ENCODE measurements at regions of chr6 and their contacts with region 1.

Region 1: GRCh38 chr6:26031595-26032339 is 55.5 kb upstream of the HFE start:
- DNase-seq: peak; percentile 99
- ATAC-seq: peak; percentile 66
- H3K4me3 ChIP-seq: peak overlapping the region; percentile 70 to 74
- H3K27ac ChIP-seq: peak overlapping the region; percentile 98
- H3K4me1 ChIP-seq: peaks cover 51 to 87% of the 10 kb centered on the region in 2 experiments
- H3K27me3 ChIP-seq: no peaks in the 10 kb centered on the region
- CTCF ChIP-seq: no peak
- POLR2A ChIP-seq: peak; percentile 99
- RAD21 ChIP-seq: peak; percentile 5; the same call in 1 of the 2 replicates

Region 2: GRCh38 chr6:25942561-25943147 is 89.1 kb before region 1 on chr6:
- CTCF ChIA-PET with region 1: no interaction called
- POLR2A ChIA-PET with region 1: no interaction called
- RAD21 ChIA-PET with region 1: no interaction called
- intact Hi-C with region 1: no loop called
- DNase-seq: peak; percentile 48
- ATAC-seq: peak; percentile 84
- H3K4me3 ChIP-seq: no peak overlapping the region
- H3K27ac ChIP-seq: no peak overlapping the region
- H3K4me1 ChIP-seq: no peaks in the 10 kb centered on the region
- H3K27me3 ChIP-seq: no peaks in the 10 kb centered on the region
- CTCF ChIP-seq: peak; percentile 42 to 73 (median 60); a peak in 4 of 6 replicates
- POLR2A ChIP-seq: no peak
- RAD21 ChIP-seq: peak; percentile 88

Region 3: GRCh38 chr6:25971187-25971811 is 60.5 kb before region 1 on chr6:
- CTCF ChIA-PET with region 1: no interaction called
- POLR2A ChIA-PET with region 1: no interaction called
- RAD21 ChIA-PET with region 1: no interaction called
- intact Hi-C with region 1: no loop called
- DNase-seq: peak; percentile 73
- ATAC-seq: peak; percentile 93
- H3K4me3 ChIP-seq: peak overlapping the region in 1 of 2 experiments; percentile 39; a peak in 2 of 4 replicates
- H3K27ac ChIP-seq: peak overlapping the region; percentile 59; the same call in 1 of the 2 replicates
- H3K4me1 ChIP-seq: peaks cover 16 to 19% of the 10 kb centered on the region in 2 experiments
- H3K27me3 ChIP-seq: no peaks in the 10 kb centered on the region
- CTCF ChIP-seq: no peak
- POLR2A ChIP-seq: no peak
- RAD21 ChIP-seq: no peak

Region 4: DNA sequence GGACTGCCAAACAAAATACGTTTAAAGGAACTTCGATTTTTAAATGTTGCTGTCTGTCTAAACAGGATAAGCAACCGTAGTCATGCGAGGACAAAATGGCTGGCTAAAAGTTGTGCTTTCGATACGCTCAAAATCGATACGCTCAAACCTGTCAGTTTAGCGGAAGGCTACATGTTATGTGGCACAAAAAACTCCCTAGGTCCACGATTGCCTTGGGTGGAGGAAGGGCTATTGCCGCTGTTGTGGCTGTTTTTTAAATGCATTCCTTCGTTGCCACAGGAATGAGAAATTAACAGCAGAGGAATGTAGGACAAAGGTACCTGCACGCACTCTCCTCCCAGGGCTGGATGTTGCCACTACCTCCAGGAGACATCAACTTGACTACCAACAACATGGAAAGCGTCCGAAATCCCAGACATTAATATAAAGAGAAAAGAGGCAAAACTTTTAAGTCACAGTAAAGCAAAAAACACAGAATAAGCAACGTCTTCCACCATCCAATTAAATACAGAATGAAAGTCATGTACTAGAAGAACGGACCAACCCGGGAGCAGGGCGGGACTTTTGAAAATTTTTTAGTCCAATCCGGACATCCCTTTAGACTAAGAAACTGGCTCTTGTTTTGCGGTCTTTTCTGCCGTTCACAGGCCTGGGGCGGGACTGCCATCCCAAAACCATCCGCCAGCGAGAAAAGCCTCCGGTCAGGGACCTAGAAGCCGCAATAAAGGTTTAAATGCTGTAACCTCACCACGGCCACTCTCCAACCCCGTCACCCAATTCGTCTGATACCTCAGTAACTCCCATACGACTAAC is 23.3 kb after region 1 on chr6:
- CTCF ChIA-PET with region 1: no interaction called
- POLR2A ChIA-PET with region 1: interaction called, 202 read pairs
- RAD21 ChIA-PET with region 1: no interaction called
- intact Hi-C with region 1: loop called (anchors 1 kb)
- DNase-seq: peak; percentile 98
- ATAC-seq: peak; percentile 70
- H3K4me3 ChIP-seq: peak overlapping the region; percentile 52 to 73
- H3K27ac ChIP-seq: peak overlapping the region; percentile 85
- H3K4me1 ChIP-seq: peaks cover 41 to 68% of the 10 kb centered on the region in 2 experiments
- H3K27me3 ChIP-seq: no peaks in the 10 kb centered on the region
- CTCF ChIP-seq: 0 out of 6 replicates have a peak, but pooled peaks of 1 of the 3 experiments have one; percentile 5
- POLR2A ChIP-seq: no peak
- RAD21 ChIP-seq: peak; percentile 30

Region 5: GRCh38 chr6:26103770-26104456 is 72.1 kb after region 1 on chr6:
- CTCF ChIA-PET with region 1: interaction called, 10 read pairs
- POLR2A ChIA-PET with region 1: interaction called, 54 read pairs
- RAD21 ChIA-PET with region 1: no interaction called
- intact Hi-C with region 1: loop called (anchors 1 kb)
- DNase-seq: peak; percentile 95
- ATAC-seq: peak; percentile 74
- H3K4me3 ChIP-seq: peak overlapping the region; percentile 48 to 59
- H3K27ac ChIP-seq: peak overlapping the region; percentile 94
- H3K4me1 ChIP-seq: peaks cover 17 to 39% of the 10 kb centered on the region in 2 experiments
- H3K27me3 ChIP-seq: no peaks in the 10 kb centered on the region
- CTCF ChIP-seq: peak in 2 of 3 experiments; percentile 35 to 40; a peak in 2 of 6 replicates
- POLR2A ChIP-seq: peak; percentile 99
- RAD21 ChIP-seq: peak; percentile 42

Region 6: DNA sequence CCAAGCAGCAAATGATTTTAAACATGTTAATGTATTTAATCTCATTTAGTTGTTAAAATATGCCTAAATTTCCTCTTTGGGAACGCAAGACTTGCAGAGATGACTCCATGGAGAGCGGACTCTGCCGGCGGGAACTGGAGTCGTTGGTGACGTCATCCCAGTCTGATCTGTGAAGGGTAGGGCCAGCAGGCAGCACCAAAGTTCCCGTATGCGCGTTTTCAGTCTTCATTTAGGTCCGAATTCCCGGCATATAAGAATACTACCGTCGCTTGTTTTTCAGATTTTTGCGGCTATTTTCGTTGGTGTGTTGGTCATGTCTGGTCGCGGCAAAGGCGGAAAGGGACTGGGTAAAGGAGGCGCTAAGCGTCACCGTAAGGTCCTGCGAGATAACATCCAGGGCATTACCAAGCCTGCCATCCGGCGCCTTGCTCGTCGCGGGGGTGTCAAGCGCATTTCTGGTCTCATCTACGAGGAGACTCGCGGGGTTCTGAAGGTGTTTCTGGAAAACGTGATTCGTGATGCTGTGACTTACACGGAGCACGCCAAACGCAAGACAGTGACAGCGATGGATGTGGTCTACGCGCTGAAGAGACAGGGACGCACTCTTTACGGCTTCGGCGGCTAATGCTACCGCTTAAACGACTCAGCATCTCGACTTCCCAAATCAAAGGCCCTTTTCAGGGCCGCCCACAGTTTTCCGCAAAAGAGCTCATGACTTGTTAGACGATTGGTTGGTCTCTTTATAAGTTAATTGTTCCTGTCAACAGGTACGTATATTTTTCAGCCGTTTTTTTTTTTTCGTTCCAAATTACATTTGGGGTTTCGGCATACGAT is 172.8 kb after region 1 on chr6:
- CTCF ChIA-PET with region 1: no interaction called
- POLR2A ChIA-PET with region 1: interaction called, 44 read pairs
- RAD21 ChIA-PET with region 1: no interaction called
- intact Hi-C with region 1: loop called (anchors 2 kb)
- DNase-seq: peak; percentile 98
- ATAC-seq: peak; percentile 72
- H3K4me3 ChIP-seq: peak overlapping the region; percentile 63 to 71
- H3K27ac ChIP-seq: peak overlapping the region; percentile 98
- H3K4me1 ChIP-seq: peaks cover 26 to 40% of the 10 kb centered on the region in 2 experiments
- H3K27me3 ChIP-seq: no peaks in the 10 kb centered on the region
- CTCF ChIP-seq: peak in 1 of 3 experiments; percentile 20; a peak in 2 of 6 replicates
- POLR2A ChIP-seq: peak; percentile 99
- RAD21 ChIP-seq: peak; percentile 2; the same call in 1 of the 2 replicates

Region 7: DNA sequence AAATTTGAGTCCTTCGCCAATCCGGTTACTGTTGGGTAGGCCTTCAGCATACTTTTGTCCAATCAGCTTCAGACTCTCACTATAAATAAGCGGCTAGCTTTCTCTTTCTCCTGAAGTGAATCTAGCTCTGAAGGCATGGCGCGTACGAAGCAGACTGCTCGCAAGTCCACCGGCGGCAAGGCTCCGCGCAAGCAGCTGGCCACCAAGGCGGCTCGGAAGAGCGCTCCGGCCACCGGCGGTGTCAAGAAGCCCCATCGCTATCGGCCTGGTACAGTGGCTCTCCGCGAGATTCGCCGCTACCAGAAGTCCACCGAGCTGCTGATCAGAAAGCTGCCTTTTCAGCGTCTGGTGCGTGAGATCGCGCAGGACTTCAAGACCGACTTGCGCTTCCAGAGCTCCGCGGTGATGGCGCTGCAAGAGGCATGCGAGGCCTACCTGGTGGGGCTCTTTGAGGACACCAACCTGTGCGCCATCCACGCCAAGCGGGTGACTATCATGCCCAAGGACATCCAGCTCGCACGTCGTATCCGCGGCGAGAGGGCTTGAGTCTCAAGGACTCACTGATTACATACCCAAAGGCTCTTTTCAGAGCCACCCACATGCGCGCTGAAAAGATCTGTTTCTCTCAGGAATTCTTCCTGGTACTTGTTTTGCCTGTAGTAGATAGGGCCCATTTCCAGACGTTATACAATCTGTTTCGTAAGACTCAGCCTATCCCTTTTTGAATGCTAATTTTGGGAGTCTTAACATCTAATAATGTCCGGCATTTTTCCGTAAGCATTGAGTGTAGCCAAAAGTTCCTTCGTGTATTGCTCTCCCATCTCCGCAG is 1778.4 kb after region 1 on chr6:
- CTCF ChIA-PET with region 1: no interaction called
- POLR2A ChIA-PET with region 1: interaction called, 10 read pairs
- RAD21 ChIA-PET with region 1: no interaction called
- intact Hi-C with region 1: no loop called
- DNase-seq: peak; percentile 97
- ATAC-seq: peak; percentile 43
- H3K4me3 ChIP-seq: peak overlapping the region; percentile 59 to 69
- H3K27ac ChIP-seq: peak overlapping the region; percentile 88
- H3K4me1 ChIP-seq: peaks cover 36 to 64% of the 10 kb centered on the region in 2 experiments
- H3K27me3 ChIP-seq: no peaks in the 10 kb centered on the region
- CTCF ChIP-seq: no peak
- POLR2A ChIP-seq: peak; percentile 92
- RAD21 ChIP-seq: no peak

Measured in HCT116 (cell line).